Activated CD4-positive, alpha-beta T cell treated with anti-CD3 and anti-CD28 coated beads for 36 hours (primary cell): ENCODE measurements at regions of chr5 and their contacts with region 1.

Region 1: DNA sequence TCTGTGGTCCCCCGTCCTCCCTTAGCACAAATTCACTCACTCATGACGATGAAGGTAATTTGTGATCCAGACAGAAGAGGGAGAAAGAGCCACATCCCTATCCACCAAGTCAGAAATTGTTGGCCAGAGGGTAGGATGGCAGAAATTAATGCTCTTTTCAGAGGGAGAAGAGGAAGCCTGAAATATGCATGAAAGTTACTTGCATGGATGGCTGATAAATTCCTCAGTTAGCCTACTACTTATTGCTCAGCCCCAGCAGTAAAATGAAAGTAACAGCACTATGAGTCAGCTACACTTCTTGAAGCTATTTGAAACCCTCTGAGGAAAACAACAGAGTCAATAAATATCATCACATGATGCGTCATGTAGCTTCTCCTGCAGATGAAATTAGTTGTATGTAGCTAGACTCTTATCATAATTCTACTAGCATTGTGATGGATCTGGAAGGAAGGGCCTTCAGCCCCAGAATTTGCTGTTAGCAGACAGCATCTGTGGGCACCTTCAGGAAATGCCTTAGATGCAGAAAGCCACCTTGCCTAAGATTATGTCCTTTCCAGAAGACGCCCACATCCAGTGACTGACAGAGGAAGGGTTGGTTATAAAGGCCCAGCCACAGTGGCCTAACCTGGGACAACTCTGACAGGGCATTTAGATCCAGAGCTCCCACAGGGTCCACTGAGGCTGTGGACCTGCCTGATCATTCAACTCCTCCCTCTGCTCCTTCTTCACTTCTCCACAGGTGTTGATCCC is 81.2 kb upstream of the CCDC112 start:
- DNase-seq: no peak
- ATAC-seq: peak; percentile 87
- H3K4me3 Mint-ChIP-seq: no peak overlapping the region
- H3K27ac Mint-ChIP-seq: no peak overlapping the region
- H3K4me1 Mint-ChIP-seq: peaks cover 14% of the 10 kb centered on the region
- H3K27me3 Mint-ChIP-seq: peaks cover 9% of the 10 kb centered on the region

Region 2: GRCh38 chr5:115333164-115333563 is 44.5 kb before region 1 on chr5:
- CTCF ChIA-PET with region 1: no interaction called
- POLR2A ChIA-PET with region 1: no interaction called
- intact Hi-C with region 1: loop called in 1 of 2 experiments (anchors 2 kb)
- DNase-seq: peak; percentile 7
- ATAC-seq: peak; percentile 42
- H3K4me3 Mint-ChIP-seq: no peak overlapping the region
- H3K27ac Mint-ChIP-seq: no peak overlapping the region
- H3K4me1 Mint-ChIP-seq: peaks cover 9% of the 10 kb centered on the region
- H3K27me3 Mint-ChIP-seq: peaks cover 17% of the 10 kb centered on the region

Region 3: DNA sequence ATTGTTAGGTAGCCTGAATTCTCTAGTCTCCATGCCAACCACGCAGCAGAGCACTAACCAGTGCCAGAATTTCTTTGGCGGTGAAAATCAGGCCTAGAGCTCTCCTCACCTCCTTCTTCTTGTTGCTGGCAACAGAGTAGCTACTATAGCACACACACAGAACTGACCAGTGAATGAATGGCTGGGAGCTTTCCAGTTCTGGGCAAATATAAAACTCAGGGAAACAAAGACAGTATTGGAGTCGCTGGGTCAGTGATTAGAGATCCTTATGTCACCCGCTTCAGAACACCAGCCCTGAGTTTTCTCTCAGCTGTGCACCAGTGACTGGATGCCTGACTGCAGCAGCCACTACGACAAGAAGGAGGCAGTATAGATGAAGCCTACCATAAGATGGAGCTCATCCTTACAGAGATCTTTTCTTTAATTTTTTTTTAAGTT is 193.8 kb after region 1 on chr5:
- CTCF ChIA-PET with region 1: interaction called, 4 read pairs
- POLR2A ChIA-PET with region 1: interaction called, 5 read pairs
- intact Hi-C with region 1: loop called in 1 of 2 experiments (anchors 5 kb)
- DNase-seq: no peak
- ATAC-seq: no peak
- H3K4me3 Mint-ChIP-seq: no peak overlapping the region
- H3K27ac Mint-ChIP-seq: no peak overlapping the region
- H3K4me1 Mint-ChIP-seq: peaks cover 3% of the 10 kb centered on the region
- H3K27me3 Mint-ChIP-seq: no peaks in the 10 kb centered on the region